ENCODE measurements at regions of chr5 and their contacts with region 1.

Region 1: DNA sequence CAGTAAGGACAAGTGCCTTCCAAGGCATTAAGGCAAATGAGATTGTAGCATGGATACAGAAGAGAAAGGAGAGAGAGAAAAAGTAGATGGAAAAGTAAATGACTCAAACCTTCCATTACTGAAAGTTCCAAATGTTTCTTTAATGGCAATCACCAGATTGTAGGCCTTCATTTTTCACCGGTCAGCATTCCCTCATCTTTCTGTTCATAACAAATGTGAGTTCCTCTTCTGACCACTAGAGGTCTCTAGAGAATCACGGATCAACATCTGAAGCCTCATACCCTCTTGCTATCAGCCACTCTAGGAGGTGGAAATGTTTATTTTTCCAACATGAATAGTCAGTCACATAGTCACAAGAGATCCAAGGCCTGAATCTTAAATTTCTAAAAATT is 73.6 kb upstream of the RPS23 start:
- DNase-seq: no peak
- ATAC-seq: peak; percentile 66 to 79 (median 73)
- H3K4me3 ChIP-seq: no peak overlapping the region
- H3K27ac ChIP-seq: peak overlapping the region; percentile 16 to 70 (median 40)
- H3K4me1 ChIP-seq: peaks cover 0 to 54% (median 27%) of the 10 kb centered on the region in 12 donors
- H3K27me3 ChIP-seq: no peaks in the 10 kb centered on the region
- CTCF ChIP-seq: peak; percentile 68 to 87 (median 80)
- POLR2A ChIP-seq: no peak

Region 2: DNA sequence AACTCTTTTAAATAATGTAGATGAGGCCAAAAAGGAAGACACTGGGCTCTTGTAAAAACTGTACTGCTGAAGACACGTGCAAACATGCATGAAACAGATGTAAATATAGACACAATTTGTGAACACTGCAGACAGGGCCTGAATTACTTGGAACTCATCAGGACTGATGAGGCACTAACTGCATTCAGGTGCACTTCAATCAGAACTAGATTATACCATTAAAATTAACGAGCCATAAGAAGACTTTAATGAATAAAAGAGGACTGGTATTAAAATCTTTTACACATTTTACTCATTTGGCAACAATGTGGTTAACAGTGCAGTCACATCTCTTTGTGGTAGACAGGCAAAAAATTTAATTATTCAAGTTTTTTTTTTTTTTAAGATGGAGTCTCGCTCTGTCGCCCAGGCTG is 1063.7 kb before region 1 on chr5:
- intact Hi-C with region 1: no loop called
- DNase-seq: no peak
- ATAC-seq: no peak
- H3K4me3 ChIP-seq: no peak overlapping the region
- H3K27ac ChIP-seq: no peak overlapping the region
- H3K4me1 ChIP-seq: no peaks in the 10 kb centered on the region
- H3K27me3 ChIP-seq: no peaks in the 10 kb centered on the region
- CTCF ChIP-seq: no peak
- POLR2A ChIP-seq: no peak

Region 3: DNA sequence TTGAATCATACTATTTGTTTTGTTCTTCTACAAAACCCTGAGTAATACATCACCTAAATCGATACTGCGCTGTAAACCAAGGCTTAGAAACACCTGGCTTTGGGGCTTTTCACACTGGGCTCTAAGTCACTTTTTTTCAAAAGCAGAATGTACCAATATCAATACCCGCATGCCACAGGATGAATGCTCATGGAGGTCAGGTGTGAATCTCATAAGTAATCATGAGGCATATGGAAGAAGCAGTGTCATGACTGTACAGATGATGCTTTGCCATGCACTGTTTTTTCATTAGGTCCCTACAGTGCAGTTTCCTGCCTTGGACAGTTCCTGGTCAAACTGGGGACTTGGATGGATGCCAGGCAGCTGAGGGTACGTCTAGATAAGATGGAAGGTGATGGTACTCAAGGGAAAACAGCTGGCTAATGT is 428.9 kb before region 1 on chr5:
- intact Hi-C with region 1: no loop called
- DNase-seq: no peak
- ATAC-seq: no peak
- H3K4me3 ChIP-seq: no peak overlapping the region
- H3K27ac ChIP-seq: no peak overlapping the region
- H3K4me1 ChIP-seq: peaks cover 0 to 8% (median 0%) of the 10 kb centered on the region in 12 donors
- H3K27me3 ChIP-seq: no peaks in the 10 kb centered on the region
- CTCF ChIP-seq: no peak
- POLR2A ChIP-seq: no peak

Region 4: GRCh38 chr5:82312373-82312856 is 39.3 kb before region 1 on chr5:
- intact Hi-C with region 1: loop called in 1 of 10 experiments (anchors 2 kb)
- DNase-seq: peak; percentile 54 to 69 (median 67)
- ATAC-seq: peak; percentile 72 to 87 (median 82)
- H3K4me3 ChIP-seq: peak overlapping the region in 4 of 12 donors; percentile 10 to 26 (median 14)
- H3K27ac ChIP-seq: peak overlapping the region in 7 of 12 donors; percentile 17 to 69 (median 43)
- H3K4me1 ChIP-seq: peaks cover 0 to 16% (median 11%) of the 10 kb centered on the region in 12 donors
- H3K27me3 ChIP-seq: no peaks in the 10 kb centered on the region
- CTCF ChIP-seq: peak; percentile 59 to 89 (median 80)
- POLR2A ChIP-seq: no peak

Region 5: DNA sequence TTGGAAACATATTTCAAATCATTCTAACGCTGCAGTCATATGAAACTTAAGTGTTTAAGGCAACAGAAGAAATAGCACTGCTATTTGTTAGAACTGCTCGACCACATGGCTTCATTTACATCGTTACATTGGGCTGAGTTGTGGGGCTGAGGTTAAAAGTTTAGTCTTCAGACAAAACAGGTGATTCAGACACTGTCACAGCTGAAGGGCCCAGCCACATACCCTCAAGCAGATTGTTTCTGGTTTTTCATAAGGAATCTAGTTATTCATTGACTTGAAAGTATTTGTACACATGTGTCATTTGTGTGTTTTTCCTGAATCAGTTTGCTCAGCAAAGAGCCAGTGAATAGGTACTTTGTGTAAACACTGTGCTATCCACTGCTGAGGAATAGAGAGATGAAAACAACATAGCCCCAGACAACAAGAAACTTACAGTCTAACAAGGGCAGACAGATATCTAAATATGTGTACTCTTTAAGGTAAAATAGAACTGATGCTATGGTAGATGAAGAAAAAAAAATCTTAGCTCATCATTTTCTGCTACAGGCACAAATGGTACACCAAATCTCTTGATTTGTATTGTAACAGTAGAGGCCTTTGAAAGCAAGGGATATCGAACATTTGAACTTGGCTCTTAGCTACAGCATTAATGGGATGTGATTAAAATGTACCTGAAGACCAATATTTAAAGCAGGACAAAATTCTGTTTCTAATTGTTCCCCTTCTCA is 284.0 kb after region 1 on chr5:
- intact Hi-C with region 1: loop called in 8 of 10 experiments (anchors 5 to 10 kb)
- DNase-seq: no peak
- ATAC-seq: no peak
- H3K4me3 ChIP-seq: no peak overlapping the region
- H3K27ac ChIP-seq: no peak overlapping the region
- H3K4me1 ChIP-seq: peaks cover 0 to 12% (median under 1%) of the 10 kb centered on the region in 12 donors
- H3K27me3 ChIP-seq: no peaks in the 10 kb centered on the region
- CTCF ChIP-seq: no peak
- POLR2A ChIP-seq: no peak

Region 6: GRCh38 chr5:82793808-82794419 is 442.2 kb after region 1 on chr5:
- intact Hi-C with region 1: loop called in 6 of 10 experiments (anchors 5 to 10 kb)
- DNase-seq: no peak
- ATAC-seq: no peak
- H3K4me3 ChIP-seq: no peak overlapping the region
- H3K27ac ChIP-seq: no peak overlapping the region
- H3K4me1 ChIP-seq: no peaks in the 10 kb centered on the region
- H3K27me3 ChIP-seq: no peaks in the 10 kb centered on the region
- CTCF ChIP-seq: peak; percentile 51 to 76 (median 63)
- POLR2A ChIP-seq: no peak

Region 7: DNA sequence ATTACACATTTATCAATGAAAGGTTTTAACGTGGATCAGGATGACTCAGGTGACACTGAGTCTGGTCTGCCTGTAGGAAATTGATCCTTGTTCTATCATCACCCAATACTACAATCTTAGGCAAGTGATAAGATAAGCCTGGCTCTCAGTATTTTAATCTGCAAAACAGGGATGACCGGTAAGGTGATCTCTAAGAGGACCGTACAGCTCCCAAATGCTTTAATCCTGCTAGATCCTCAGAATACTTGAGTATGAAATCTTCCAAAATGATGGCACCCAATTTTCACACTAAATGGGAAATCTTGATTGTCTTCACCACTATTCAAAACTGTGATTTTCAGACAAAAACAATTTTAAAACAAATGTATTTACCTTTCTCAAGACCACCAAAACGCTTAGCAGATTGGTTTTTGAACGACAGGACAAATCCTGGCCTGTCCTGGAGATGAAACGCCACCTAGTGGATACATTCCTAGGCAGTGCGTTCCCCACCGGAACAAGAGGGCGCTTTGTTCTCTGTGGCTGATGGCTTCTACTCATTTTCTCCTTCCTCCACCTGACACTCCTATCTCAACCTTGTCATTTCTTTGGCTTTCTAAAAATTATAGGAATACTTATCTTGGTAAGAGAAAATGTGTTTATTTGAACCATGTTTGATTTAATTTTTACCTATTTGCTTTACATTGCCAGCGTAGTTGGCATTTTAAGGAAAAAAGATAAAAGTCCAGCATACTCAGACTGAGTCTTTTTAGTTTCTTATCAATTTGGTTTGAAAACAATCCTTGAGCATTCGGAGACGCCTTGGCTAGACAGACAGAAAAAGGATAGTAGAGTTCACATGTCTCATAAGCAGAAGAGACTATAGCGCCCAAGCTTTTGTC is 1078.6 kb after region 1 on chr5:
- intact Hi-C with region 1: loop called in 2 of 10 experiments (anchors 10 kb)
- DNase-seq: peak; percentile 34 to 56 (median 53)
- ATAC-seq: peak in 3 of 4 donors; percentile 80 to 88 (median 82)
- H3K4me3 ChIP-seq: no peak overlapping the region
- H3K27ac ChIP-seq: no peak overlapping the region
- H3K4me1 ChIP-seq: peaks cover 0 to 16% (median 0%) of the 10 kb centered on the region in 12 donors
- H3K27me3 ChIP-seq: no peaks in the 10 kb centered on the region
- CTCF ChIP-seq: peak; percentile 70 to 92 (median 84)
- POLR2A ChIP-seq: no peak

Region 8: GRCh38 chr5:83553000-83553486 is 1201.3 kb after region 1 on chr5:
- intact Hi-C with region 1: loop called in 1 of 10 experiments (anchors 5 kb)
- DNase-seq: peak in 4 of 5 donors; percentile 43 to 76 (median 66)
- ATAC-seq: peak; percentile 47 to 95 (median 80)
- H3K4me3 ChIP-seq: no peak overlapping the region
- H3K27ac ChIP-seq: peak overlapping the region in 7 of 12 donors; percentile 15 to 55 (median 47)
- H3K4me1 ChIP-seq: peaks cover 0 to 24% (median 0%) of the 10 kb centered on the region in 12 donors
- H3K27me3 ChIP-seq: no peaks in the 10 kb centered on the region
- CTCF ChIP-seq: no peak
- POLR2A ChIP-seq: no peak

Measured in heart left ventricle (tissue), 16 donors.